Vagina (tissue), 2 donors: ENCODE measurements at regions of chr22 and their contacts with region 1.

Region 1: GRCh38 chr22:17628304-17629166 is at the start of gene ATP6V1E1:
- DNase-seq: peak; percentile 97 to 99
- H3K4me3 ChIP-seq: peak within 1 kb of the TSS; percentile 86 to 90
- H3K27ac ChIP-seq: peak within 1 kb of the TSS; percentile 93
- H3K4me1 ChIP-seq: peaks cover 35% of the 10 kb centered on the region
- H3K27me3 ChIP-seq: no peaks in the 10 kb centered on the region
- CTCF ChIP-seq: no peak
- POLR2A ChIP-seq: peak in 1 of 2 donors; percentile 71
- total RNA-seq, gene ATP6V1E1: 88.9 TPM

Region 2: DNA sequence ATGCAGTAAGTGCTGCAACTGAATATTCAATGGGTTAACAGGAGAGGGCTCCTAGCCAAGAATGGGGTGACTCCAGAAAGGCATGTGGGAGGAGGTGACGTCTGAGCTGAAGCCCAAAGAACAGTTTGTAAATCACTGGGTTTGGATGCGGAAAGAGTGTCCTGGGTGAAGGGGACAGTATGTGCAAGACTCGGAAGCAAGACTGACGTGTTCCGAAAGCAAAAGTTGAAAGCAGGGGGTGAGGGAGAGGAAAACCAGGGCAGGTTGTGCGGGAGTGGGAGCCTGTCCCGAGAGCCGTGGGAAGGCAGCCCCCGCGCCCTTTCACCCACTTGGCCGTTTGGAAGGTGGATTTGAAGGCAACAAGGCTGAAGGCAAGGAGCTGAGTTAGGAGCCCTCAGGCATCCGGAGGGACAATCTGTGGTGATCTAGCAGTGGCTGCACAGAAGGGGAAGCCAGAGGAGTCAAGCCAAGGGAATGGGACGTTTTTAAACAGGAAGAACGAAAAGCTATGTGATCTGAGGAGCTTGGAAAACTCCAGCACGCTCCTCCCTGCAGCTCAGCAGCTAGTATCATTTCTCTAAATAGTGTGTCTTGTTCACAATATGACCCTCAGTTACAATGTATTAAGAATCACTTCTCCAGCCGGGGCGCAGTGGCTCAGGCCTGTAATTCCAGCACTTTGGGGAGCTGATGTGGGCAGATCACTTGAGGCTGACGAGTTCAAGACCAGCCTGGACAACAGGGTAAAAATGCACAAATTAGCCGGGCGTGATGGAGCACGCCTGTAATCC is 57.5 kb before region 1 on chr22:
- intact Hi-C with region 1: loop called (anchors 5 kb)
- DNase-seq: peak in 1 of 2 donors; percentile 97
- H3K4me3 ChIP-seq: peak overlapping the region; percentile 29 to 41
- H3K27ac ChIP-seq: peak overlapping the region; percentile 66
- H3K4me1 ChIP-seq: peaks cover 25% of the 10 kb centered on the region
- H3K27me3 ChIP-seq: no peaks in the 10 kb centered on the region
- CTCF ChIP-seq: no peak
- POLR2A ChIP-seq: peak in 1 of 2 donors; percentile 51